ENCODE measurements at regions of chr7 and their contacts with region 1.

Region 1: GRCh38 chr7:27921081-27921836 is 181.3 kb downstream of the TAX1BP1 start:
- DNase-seq: peak in 1 of 2 experiments; percentile 68
- H3K4me3 ChIP-seq: no peak overlapping the region
- H3K4me3 Mint-ChIP-seq: no peak overlapping the region
- H3K27ac Mint-ChIP-seq: no peak overlapping the region
- H3K4me1 ChIP-seq: no peaks in the 10 kb centered on the region
- H3K4me1 Mint-ChIP-seq: no peaks in the 10 kb centered on the region
- H3K27me3 ChIP-seq: no peaks in the 10 kb centered on the region
- H3K27me3 Mint-ChIP-seq: no peaks in the 10 kb centered on the region
- CTCF ChIP-seq: peak; percentile 66 to 68

Region 2: GRCh38 chr7:27434756-27435400 is 486.4 kb before region 1 on chr7:
- CTCF ChIA-PET with region 1: no interaction called
- POLR2A ChIA-PET with region 1: no interaction called
- intact Hi-C with region 1: no loop called
- DNase-seq: no peak
- H3K4me3 ChIP-seq: no peak overlapping the region
- H3K4me3 Mint-ChIP-seq: no peak overlapping the region
- H3K27ac Mint-ChIP-seq: no peak overlapping the region
- H3K4me1 ChIP-seq: no peaks in the 10 kb centered on the region
- H3K4me1 Mint-ChIP-seq: no peaks in the 10 kb centered on the region
- H3K27me3 ChIP-seq: no peaks in the 10 kb centered on the region
- H3K27me3 Mint-ChIP-seq: no peaks in the 10 kb centered on the region
- CTCF ChIP-seq: peak in 1 of 2 experiments; percentile 11

Region 3: GRCh38 chr7:27586825-27587224 is 334.4 kb before region 1 on chr7:
- CTCF ChIA-PET with region 1: no interaction called
- POLR2A ChIA-PET with region 1: no interaction called
- intact Hi-C with region 1: loop called (anchors 10 kb)
- DNase-seq: no peak
- H3K4me3 ChIP-seq: no peak overlapping the region
- H3K4me3 Mint-ChIP-seq: no peak overlapping the region
- H3K27ac Mint-ChIP-seq: no peak overlapping the region
- H3K4me1 ChIP-seq: no peaks in the 10 kb centered on the region
- H3K4me1 Mint-ChIP-seq: no peaks in the 10 kb centered on the region
- H3K27me3 ChIP-seq: no peaks in the 10 kb centered on the region
- H3K27me3 Mint-ChIP-seq: no peaks in the 10 kb centered on the region
- CTCF ChIP-seq: no peak

Region 4: GRCh38 chr7:27689591-27690164 is 231.6 kb before region 1 on chr7:
- CTCF ChIA-PET with region 1: interaction called, 4 read pairs
- POLR2A ChIA-PET with region 1: no interaction called
- intact Hi-C with region 1: loop called (anchors 1 kb)
- DNase-seq: peak; percentile 42 to 43
- H3K4me3 ChIP-seq: no peak overlapping the region
- H3K4me3 Mint-ChIP-seq: no peak overlapping the region
- H3K27ac Mint-ChIP-seq: no peak overlapping the region
- H3K4me1 ChIP-seq: no peaks in the 10 kb centered on the region
- H3K4me1 Mint-ChIP-seq: no peaks in the 10 kb centered on the region
- H3K27me3 ChIP-seq: no peaks in the 10 kb centered on the region; the same call in 1 of the 2 replicates
- H3K27me3 Mint-ChIP-seq: no peaks in the 10 kb centered on the region
- CTCF ChIP-seq: peak; percentile 19 to 60

Region 5: GRCh38 chr7:27745064-27745583 is 176.1 kb before region 1 on chr7:
- CTCF ChIA-PET with region 1: interaction called, 5 read pairs
- POLR2A ChIA-PET with region 1: interaction called, 4 read pairs
- intact Hi-C with region 1: loop called (anchors 1 kb)
- DNase-seq: peak; percentile 52 to 61
- H3K4me3 ChIP-seq: no peak overlapping the region
- H3K4me3 Mint-ChIP-seq: peak overlapping the region; percentile 20
- H3K27ac Mint-ChIP-seq: peak overlapping the region; percentile 36
- H3K4me1 ChIP-seq: peaks cover 16% of the 10 kb centered on the region
- H3K4me1 Mint-ChIP-seq: peaks cover 7% of the 10 kb centered on the region
- H3K27me3 ChIP-seq: no peaks in the 10 kb centered on the region
- H3K27me3 Mint-ChIP-seq: no peaks in the 10 kb centered on the region
- CTCF ChIP-seq: peak; percentile 61 to 81

Region 6: DNA sequence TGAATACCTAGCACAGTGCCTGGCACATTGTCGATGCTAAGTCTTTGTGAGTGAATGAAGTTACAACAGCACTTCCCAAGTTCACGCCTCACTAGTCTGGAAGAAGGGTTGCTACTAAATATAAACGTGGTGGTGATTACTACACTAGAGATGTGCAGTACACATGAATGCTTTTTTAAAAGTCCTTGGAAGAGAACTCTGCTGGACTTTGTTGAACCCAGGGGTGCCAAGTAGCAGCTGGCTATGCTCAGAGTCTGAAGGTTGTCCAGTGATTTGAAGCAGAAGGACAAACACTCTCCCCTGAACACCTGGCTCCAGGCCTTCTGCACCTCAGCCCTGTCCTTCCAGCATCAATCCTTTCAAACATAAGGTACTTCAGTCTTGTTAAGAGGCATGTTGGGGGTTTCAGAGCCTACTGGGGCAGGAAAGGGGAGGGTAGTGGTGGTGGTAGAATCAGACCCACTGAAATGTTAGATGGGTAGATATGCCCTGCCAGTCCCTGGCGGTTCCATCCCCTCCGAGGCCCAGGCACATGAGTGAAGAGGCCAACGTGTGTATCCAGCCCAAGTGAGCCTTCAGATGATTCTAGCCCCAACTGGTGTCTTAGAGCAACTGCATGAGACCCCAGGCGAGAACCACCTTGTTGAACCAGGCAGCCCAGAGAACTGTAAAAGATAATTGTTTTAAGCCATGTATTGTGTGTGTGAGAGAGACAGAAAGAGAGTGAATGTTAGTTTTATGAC is 86.9 kb before region 1 on chr7:
- CTCF ChIA-PET with region 1: no interaction called
- POLR2A ChIA-PET with region 1: no interaction called
- intact Hi-C with region 1: loop called (anchors 10 kb)
- DNase-seq: no peak
- H3K4me3 ChIP-seq: no peak overlapping the region
- H3K4me3 Mint-ChIP-seq: no peak overlapping the region
- H3K27ac Mint-ChIP-seq: no peak overlapping the region
- H3K4me1 ChIP-seq: peaks cover 11% of the 10 kb centered on the region
- H3K4me1 Mint-ChIP-seq: peaks cover 7% of the 10 kb centered on the region
- H3K27me3 ChIP-seq: no peaks in the 10 kb centered on the region
- H3K27me3 Mint-ChIP-seq: no peaks in the 10 kb centered on the region
- CTCF ChIP-seq: no peak

Region 7: GRCh38 chr7:27890205-27890849 is 30.9 kb before region 1 on chr7:
- CTCF ChIA-PET with region 1: no interaction called
- POLR2A ChIA-PET with region 1: no interaction called
- intact Hi-C with region 1: no loop called
- DNase-seq: no peak
- H3K4me3 ChIP-seq: no peak overlapping the region
- H3K4me3 Mint-ChIP-seq: no peak overlapping the region
- H3K27ac Mint-ChIP-seq: no peak overlapping the region
- H3K4me1 ChIP-seq: no peaks in the 10 kb centered on the region
- H3K4me1 Mint-ChIP-seq: no peaks in the 10 kb centered on the region
- H3K27me3 ChIP-seq: no peaks in the 10 kb centered on the region
- H3K27me3 Mint-ChIP-seq: no peaks in the 10 kb centered on the region
- CTCF ChIP-seq: no peak

Region 8: GRCh38 chr7:28020302-28020940 is 99.2 kb after region 1 on chr7:
- CTCF ChIA-PET with region 1: interaction called, 3 read pairs
- POLR2A ChIA-PET with region 1: no interaction called
- intact Hi-C with region 1: loop called (anchors 1 kb)
- DNase-seq: peak; percentile 76 to 77
- H3K4me3 ChIP-seq: no peak overlapping the region
- H3K4me3 Mint-ChIP-seq: peak overlapping the region; percentile 43
- H3K27ac Mint-ChIP-seq: no peak overlapping the region
- H3K4me1 ChIP-seq: peaks cover 3% of the 10 kb centered on the region; the same call in 1 of the 2 replicates
- H3K4me1 Mint-ChIP-seq: no peaks in the 10 kb centered on the region
- H3K27me3 ChIP-seq: no peaks in the 10 kb centered on the region; the same call in 1 of the 2 replicates
- H3K27me3 Mint-ChIP-seq: no peaks in the 10 kb centered on the region
- CTCF ChIP-seq: peak; percentile 87 to 88

Region 9: GRCh38 chr7:28062197-28062991 is 141.1 kb after region 1 on chr7:
- CTCF ChIA-PET with region 1: no interaction called
- POLR2A ChIA-PET with region 1: no interaction called
- intact Hi-C with region 1: no loop called
- DNase-seq: peak; percentile 69 to 76
- H3K4me3 ChIP-seq: no peak overlapping the region
- H3K4me3 Mint-ChIP-seq: no peak overlapping the region
- H3K27ac Mint-ChIP-seq: no peak overlapping the region
- H3K4me1 ChIP-seq: no peaks in the 10 kb centered on the region
- H3K4me1 Mint-ChIP-seq: peaks cover 7% of the 10 kb centered on the region
- H3K27me3 ChIP-seq: no peaks in the 10 kb centered on the region
- H3K27me3 Mint-ChIP-seq: peaks cover 8% of the 10 kb centered on the region
- CTCF ChIP-seq: peak; percentile 76 to 86

Region 10: GRCh38 chr7:28096713-28097112 is 175.5 kb after region 1 on chr7:
- CTCF ChIA-PET with region 1: no interaction called
- POLR2A ChIA-PET with region 1: no interaction called
- intact Hi-C with region 1: loop called (anchors 10 kb)
- DNase-seq: peak in 1 of 2 experiments; percentile 66
- H3K4me3 ChIP-seq: no peak overlapping the region
- H3K4me3 Mint-ChIP-seq: no peak overlapping the region
- H3K27ac Mint-ChIP-seq: no peak overlapping the region
- H3K4me1 ChIP-seq: no peaks in the 10 kb centered on the region
- H3K4me1 Mint-ChIP-seq: no peaks in the 10 kb centered on the region
- H3K27me3 ChIP-seq: no peaks in the 10 kb centered on the region
- H3K27me3 Mint-ChIP-seq: peaks cover 3% of the 10 kb centered on the region
- CTCF ChIP-seq: peak; percentile 80 to 84